Cardiac septum (tissue), 1 donor: ENCODE measurements at regions of chr7 and their contacts with region 1.

Region 1: GRCh38 chr7:114930829-114931655 is 9.1 kb downstream of the MDFIC start:
- DNase-seq: no peak

Region 2: DNA sequence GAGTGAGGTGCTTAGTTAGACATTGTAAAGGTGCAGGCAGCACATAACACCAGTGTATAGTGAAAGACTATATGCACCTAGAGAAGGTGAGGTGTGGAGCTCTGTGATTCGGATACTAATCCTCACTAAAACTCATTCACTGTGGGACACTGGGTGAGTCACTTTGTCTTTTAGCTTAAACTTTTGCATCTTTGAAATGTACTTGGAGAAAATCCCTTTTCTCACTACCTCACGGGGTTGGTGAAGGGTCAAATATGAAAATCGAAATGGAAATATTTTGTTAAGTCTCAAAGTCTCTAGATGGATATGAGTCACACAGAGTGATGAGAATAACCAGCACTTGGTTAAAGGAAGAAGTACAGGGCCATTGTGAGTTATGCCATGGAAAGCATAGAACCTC is 28.9 kb after region 1 on chr7:
- intact Hi-C with region 1: loop called (anchors 2 kb)
- DNase-seq: no peak

Region 3: DNA sequence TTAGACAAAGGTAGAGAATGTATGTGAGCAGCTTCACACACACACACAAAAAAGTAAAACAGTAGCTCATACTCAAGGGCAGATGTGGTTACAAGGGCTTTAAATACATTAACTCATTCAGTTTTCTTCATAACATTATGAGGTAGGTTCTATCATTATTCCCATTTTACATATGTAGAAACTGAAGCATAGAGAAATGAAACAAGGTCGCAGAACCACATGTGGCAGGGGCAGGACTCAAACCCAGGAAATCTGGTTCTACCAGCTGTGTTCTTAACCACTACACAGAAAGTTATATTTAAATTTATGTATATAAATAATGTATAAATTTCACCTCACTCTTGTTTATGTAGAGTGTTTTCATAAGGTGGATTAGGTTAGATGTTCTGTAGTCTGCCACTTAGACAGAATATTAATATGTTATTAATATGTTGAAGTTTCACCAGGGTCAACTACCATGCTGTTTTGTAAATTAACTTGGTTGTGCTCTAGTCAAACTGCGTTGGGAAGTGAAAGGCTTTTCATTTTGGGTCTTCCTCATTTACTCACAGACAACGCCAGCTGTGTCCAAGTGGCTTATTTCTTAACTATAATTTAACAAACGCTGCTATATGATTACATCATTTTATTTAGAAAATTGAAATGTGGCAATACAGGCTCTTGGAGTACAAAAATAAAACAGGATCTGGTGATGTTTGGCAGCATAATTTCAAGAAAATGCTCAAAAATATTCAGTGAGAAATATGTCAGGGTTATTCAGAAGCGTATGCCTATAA is 129.2 kb after region 1 on chr7:
- intact Hi-C with region 1: no loop called
- DNase-seq: no peak